Activated naive CD4-positive, alpha-beta T cell treated with anti-CD3 and anti-CD28 coated beads for 36 hours (primary cell): ENCODE measurements at regions of chr2 and their contacts with region 1.

Region 1: DNA sequence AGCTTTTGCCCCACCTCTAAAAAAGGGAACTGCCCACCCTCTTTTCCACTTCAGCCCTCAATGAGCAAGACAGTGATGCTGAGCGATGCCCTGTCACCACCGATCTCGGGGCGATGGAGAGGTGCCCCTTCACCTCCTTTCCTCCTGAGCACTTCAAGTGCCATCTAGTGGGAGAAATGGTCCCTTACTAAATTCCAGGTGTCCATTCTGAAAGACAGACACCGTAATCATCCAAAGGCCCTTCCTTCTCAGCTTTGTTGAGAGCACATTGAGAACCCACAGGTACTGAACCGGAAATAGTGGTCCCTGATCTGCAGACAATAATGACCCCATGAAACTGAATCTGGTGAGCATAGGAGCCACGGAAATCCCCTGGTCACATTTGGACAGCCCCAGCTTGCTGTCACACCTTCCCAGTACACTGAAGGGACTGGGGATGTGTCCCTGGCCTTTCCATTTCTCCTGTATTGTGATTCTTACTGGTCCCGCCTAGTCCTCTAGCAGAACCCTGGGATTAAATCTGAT is 38.5 kb downstream of the KCTD18 start:
- DNase-seq: peak; percentile 59
- H3K4me3 Mint-ChIP-seq: no peak overlapping the region
- H3K27ac Mint-ChIP-seq: no peak overlapping the region
- H3K4me1 Mint-ChIP-seq: peaks cover 38% of the 10 kb centered on the region
- H3K27me3 Mint-ChIP-seq: no peaks in the 10 kb centered on the region

Region 2: DNA sequence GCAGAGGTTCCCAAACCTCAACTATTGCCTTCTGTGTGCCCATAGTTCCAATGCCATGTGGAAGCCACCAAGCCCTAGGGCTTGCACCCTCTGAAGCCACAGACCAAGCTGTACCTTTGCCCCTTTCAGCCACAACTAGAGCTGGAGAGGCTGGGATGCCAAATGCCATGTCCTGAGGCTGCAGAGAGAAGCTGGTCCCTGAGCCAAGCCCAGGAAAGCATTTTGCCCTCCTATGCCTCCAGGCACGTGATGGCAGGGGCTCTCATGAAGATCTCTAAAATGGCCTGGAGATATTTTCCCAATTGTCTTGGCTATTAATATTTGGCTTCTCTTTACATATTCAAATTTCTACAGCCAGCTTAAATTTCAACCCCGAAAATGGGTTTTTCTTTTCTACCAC is 1485.8 kb before region 1 on chr2:
- CTCF ChIA-PET with region 1: no interaction called
- intact Hi-C with region 1: no loop called
- DNase-seq: no peak
- H3K4me3 Mint-ChIP-seq: no peak overlapping the region
- H3K27ac Mint-ChIP-seq: no peak overlapping the region
- H3K4me1 Mint-ChIP-seq: no peaks in the 10 kb centered on the region
- H3K27me3 Mint-ChIP-seq: no peaks in the 10 kb centered on the region

Region 3: DNA sequence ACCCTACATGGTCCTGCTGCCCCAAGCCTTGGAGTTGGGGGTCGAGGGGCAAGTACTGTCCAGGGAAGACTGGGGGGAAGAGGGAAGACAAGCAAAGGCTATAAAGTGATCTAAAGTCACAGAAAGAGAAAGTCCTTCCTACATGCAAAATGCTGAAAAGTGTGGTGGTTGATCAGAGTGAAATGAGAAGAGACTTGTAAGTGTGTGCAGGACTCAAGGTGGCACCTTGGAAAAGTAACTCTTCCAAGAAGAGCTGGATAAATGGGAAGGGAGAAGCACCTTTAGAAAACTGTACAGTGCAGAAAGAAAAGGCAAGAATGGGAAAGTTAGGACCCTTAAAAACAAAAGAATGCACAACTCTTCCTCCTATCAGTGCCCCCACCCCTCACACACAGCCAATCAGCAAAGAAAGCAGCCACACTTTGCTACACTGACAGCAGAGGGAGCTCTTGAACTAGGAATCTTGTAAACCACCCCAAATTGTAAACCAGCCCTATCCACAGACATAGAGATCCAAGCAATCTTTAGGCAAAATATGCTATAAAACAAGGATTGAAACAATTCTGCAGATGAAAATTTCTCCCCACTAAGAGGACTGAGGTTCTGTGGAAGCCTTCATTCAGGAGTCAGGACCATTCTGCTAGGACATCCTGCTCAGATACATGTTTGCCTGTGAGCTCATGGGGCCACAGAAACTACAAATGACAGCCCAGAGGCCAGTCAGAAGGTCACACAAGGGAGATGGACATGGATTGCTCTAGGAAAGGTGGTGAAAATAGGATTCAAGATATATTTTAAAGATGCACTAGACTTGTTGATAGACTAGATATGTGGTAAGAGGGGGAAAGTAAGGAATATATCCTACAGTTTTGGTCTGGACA is 766.8 kb before region 1 on chr2:
- CTCF ChIA-PET with region 1: no interaction called
- intact Hi-C with region 1: loop called (anchors 10 kb)
- DNase-seq: peak; percentile 50
- H3K4me3 Mint-ChIP-seq: no peak overlapping the region
- H3K27ac Mint-ChIP-seq: no peak overlapping the region
- H3K4me1 Mint-ChIP-seq: no peaks in the 10 kb centered on the region
- H3K27me3 Mint-ChIP-seq: no peaks in the 10 kb centered on the region

Region 4: GRCh38 chr2:199985625-199986207 is 485.7 kb before region 1 on chr2:
- CTCF ChIA-PET with region 1: interaction called, 12 read pairs
- intact Hi-C with region 1: loop called (anchors 1 kb)
- DNase-seq: peak; percentile 82
- H3K4me3 Mint-ChIP-seq: no peak overlapping the region
- H3K27ac Mint-ChIP-seq: no peak overlapping the region
- H3K4me1 Mint-ChIP-seq: no peaks in the 10 kb centered on the region
- H3K27me3 Mint-ChIP-seq: no peaks in the 10 kb centered on the region

Region 5: DNA sequence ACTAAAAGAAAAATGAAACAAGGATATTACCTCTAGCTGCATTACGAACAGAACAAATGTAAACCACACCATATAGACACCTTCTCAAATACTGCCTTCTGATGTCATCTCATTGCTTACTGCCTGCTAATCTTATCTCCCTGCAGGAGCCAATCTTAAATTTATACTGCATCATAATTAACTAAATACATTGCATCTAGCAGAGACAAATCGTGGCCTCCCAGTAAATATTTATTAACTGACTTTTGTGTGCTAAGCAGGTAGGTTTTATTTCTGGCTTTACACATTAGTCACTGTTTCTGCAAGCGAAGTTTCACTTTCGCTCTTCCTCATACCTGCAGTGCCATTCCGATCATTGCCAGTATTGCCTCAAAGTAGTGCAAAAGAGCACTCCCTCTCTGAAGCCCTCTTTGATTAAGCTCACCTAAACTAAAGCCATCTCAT is 97.4 kb before region 1 on chr2:
- CTCF ChIA-PET with region 1: interaction called, 4 read pairs
- intact Hi-C with region 1: loop called (anchors 1 kb)
- DNase-seq: peak; percentile 66
- H3K4me3 Mint-ChIP-seq: peak overlapping the region; percentile 73
- H3K27ac Mint-ChIP-seq: peak overlapping the region; percentile 70
- H3K4me1 Mint-ChIP-seq: peaks cover 40% of the 10 kb centered on the region
- H3K27me3 Mint-ChIP-seq: no peaks in the 10 kb centered on the region

Region 6: DNA sequence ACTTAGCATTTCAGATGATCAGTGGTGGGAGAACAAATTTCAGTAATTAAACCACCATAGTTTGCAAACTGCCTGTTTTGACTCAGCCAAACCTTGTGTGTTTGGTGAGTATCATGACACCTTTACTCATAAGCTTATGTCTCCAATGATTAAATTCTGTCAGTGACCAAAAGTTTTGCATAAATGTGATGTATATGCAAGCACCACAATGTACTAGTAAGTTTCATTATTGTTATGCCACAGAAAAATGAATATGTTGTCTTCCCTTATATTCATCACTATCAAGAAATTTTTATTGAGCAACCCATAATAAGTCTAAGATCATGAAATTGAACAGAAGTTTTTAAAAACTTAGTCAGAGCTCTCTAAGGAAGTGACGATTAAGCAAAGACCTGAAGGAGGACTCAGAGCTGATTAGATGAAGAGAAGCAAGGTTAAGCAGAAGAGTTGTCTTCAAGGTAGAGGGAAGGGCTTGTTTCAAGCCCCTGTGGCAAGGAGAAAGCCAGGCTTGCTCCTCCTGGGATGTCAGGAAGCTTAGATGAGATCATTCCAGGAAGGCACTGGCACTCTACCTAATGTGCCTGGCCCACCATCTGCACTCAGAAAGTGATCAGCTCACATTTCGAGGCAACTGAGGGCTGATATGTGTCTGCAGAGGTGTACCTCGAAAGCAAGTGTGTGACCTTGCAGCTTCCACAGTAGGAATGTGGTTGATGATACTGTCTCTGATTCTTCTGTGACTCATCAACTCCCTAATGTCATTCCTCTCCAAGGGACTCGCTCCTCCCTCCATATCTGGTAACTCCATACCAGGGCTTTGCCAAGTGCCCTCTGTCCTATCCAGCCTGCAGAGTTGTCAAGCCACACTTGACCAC is 16.2 kb before region 1 on chr2:
- CTCF ChIA-PET with region 1: interaction called, 5 read pairs
- intact Hi-C with region 1: loop called (anchors 1 kb)
- DNase-seq: no peak
- H3K4me3 Mint-ChIP-seq: no peak overlapping the region
- H3K27ac Mint-ChIP-seq: peak overlapping the region; percentile 73
- H3K4me1 Mint-ChIP-seq: peaks cover 30% of the 10 kb centered on the region
- H3K27me3 Mint-ChIP-seq: no peaks in the 10 kb centered on the region

Region 7: DNA sequence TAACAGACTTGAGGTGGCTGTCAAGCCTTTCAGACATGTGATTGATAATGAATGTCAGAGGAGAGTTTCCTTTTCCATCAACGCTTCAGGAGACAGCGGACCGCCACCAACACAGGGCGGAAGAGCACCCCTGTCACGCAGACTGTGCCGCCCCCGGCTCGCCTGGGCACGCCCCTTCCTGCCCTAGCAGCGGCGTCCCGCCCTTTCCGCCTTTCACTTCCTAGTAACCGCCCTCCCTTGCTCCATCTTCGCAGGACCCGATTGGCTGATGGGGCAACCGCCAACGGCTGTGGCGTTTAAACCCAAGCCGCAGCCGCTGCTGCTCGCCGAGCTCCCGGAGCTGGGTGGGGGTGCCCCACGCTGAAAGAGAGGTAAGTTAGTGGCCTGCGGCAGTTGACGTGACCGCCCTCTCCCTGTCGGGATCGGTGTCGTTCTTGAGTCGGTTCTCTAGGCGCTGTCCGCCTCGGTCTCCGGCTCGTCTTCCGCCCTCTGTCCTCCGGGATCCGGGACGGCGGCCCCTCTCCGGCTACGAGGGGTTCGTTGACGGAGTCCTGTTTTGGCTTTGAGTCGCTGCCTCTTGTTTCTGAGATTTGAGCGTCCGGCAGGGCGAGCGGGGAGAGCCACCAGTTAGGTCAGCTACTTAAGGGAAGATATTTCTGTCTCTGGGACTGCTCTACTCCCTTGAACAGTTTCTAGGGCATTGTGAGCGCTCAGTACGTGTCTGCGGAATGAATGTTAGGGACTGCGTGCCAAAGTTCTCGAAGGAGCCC is 54.7 kb after region 1 on chr2 and contains the start of gene SGO2:
- CTCF ChIA-PET with region 1: interaction called, 5 read pairs
- intact Hi-C with region 1: loop called (anchors 1 kb)
- DNase-seq: peak; percentile 98
- H3K4me3 Mint-ChIP-seq: peak within 1 kb of the TSS; percentile 90
- H3K27ac Mint-ChIP-seq: peak within 1 kb of the TSS; percentile 84
- H3K4me1 Mint-ChIP-seq: peaks cover 17% of the 10 kb centered on the region
- H3K27me3 Mint-ChIP-seq: no peaks in the 10 kb centered on the region
- total RNA-seq, gene SGO2: 39.7 to 40.0 TPM